T-cell (primary cell): ENCODE measurements at regions of chr20 and their contacts with region 1.

Region 1: DNA sequence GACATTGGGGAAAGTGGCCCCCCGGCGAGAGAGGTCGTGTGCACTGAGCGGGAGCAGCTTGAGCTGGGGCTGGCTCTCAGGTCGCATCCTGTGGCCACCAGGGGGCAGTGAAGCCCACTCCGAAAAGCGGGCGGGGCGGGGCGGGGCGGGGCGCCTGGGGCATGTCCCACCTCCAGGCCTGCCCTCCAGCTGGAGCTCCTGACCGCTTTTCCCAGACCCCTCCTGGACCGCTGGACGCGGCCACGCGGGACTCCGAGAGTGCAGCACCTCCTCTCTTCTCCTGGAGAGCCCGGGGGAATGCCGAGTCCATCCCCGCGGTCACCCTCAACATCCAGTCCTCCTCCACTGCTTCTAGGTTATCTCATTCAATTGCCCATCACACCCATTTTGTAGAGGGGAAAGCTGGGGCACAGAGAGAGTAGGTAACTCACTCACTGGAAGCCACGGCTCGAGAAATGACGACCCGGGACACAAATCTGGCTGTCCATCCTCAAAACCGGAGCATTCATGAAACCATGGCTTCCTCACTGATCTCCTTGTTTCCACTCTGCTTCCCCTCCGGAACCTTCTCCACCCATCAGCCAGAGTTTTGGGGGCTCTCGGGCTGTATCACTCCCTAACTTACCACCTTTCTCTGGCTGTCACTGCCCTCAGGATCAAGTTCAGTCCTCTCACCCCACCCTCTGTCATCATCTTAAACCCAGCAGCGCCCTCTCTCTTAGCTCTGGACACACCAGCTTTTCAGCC is 24.1 kb downstream of the COX4I2 start:
- DNase-seq: peak; percentile 41 to 90 (median 72)
- ATAC-seq: peak; percentile 86 to 90 (median 88)
- H3K4me3 ChIP-seq: peak overlapping the region; percentile 42 to 57
- H3K4me3 Mint-ChIP-seq: peak overlapping the region; percentile 68 to 85 (median 73)
- H3K27ac ChIP-seq: peak overlapping the region; percentile 14
- H3K27ac Mint-ChIP-seq: peak overlapping the region; percentile 82 to 86
- H3K4me1 ChIP-seq: peaks cover 4 to 41% of the 10 kb centered on the region in 2 experiments
- H3K4me1 Mint-ChIP-seq: peaks cover 24 to 39% (median 27%) of the 10 kb centered on the region in 3 donors
- H3K27me3 ChIP-seq: peaks cover 0 to 4% of the 10 kb centered on the region in 2 experiments
- H3K27me3 Mint-ChIP-seq: no peaks in the 10 kb centered on the region

Region 2: DNA sequence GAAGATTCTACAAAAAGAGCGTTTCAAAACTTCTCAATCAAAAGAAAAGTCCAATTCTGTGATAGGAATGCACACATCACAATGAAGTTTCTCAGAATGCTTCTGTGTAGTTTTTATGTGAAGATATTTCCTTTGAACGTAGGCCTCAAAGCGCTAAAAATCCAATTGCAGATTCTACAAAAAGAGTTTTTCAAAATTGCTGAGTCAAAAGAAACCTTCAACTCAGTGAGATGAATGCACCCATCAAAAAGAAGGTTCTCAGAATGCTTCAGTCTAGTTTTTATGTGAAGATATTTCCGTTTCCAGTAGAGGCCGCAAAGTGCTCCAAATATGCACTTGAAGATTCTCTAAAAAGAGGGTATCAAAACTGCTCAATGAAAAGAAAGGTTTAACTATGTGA is 724.0 kb before region 1 on chr20:
- CTCF ChIA-PET with region 1: no interaction called
- POLR2A ChIA-PET with region 1: no interaction called
- DNase-seq: no peak
- ATAC-seq: no peak
- H3K4me3 ChIP-seq: no peak overlapping the region
- H3K4me3 Mint-ChIP-seq: no peak overlapping the region
- H3K27ac ChIP-seq: no peak overlapping the region
- H3K27ac Mint-ChIP-seq: no peak overlapping the region
- H3K4me1 ChIP-seq: no peaks in the 10 kb centered on the region
- H3K4me1 Mint-ChIP-seq: no peaks in the 10 kb centered on the region
- H3K27me3 ChIP-seq: no peaks in the 10 kb centered on the region
- H3K27me3 Mint-ChIP-seq: no peaks in the 10 kb centered on the region

Region 3: GRCh38 chr20:31674895-31675827 is 13.4 kb after region 1 on chr20:
- CTCF ChIA-PET with region 1: interaction called, 7 to 36 read pairs
- POLR2A ChIA-PET with region 1: no interaction called
- DNase-seq: peak; percentile 24 to 84 (median 58)
- ATAC-seq: peak; percentile 67 to 80 (median 72)
- H3K4me3 ChIP-seq: peak overlapping the region; percentile 61 to 79
- H3K4me3 Mint-ChIP-seq: peak overlapping the region; percentile 96 to 99 (median 96)
- H3K27ac ChIP-seq: peak overlapping the region; percentile 89
- H3K27ac Mint-ChIP-seq: peak overlapping the region; percentile 96 to 99
- H3K4me1 ChIP-seq: peaks cover 43 to 86% of the 10 kb centered on the region in 2 experiments
- H3K4me1 Mint-ChIP-seq: peaks cover 67 to 77% (median 72%) of the 10 kb centered on the region in 3 donors
- H3K27me3 ChIP-seq: no peaks in the 10 kb centered on the region
- H3K27me3 Mint-ChIP-seq: no peaks in the 10 kb centered on the region

Region 4: GRCh38 chr20:31684153-31685015 is 22.6 kb after region 1 on chr20:
- CTCF ChIA-PET with region 1: interaction called, 10 to 13 read pairs
- POLR2A ChIA-PET with region 1: interaction called in 1 of 2 experiments, 4 read pairs
- DNase-seq: peak in 11 of 35 experiments; percentile 2 to 47 (median 20)
- ATAC-seq: peak; percentile 23 to 77 (median 60)
- H3K4me3 ChIP-seq: no peak overlapping the region
- H3K4me3 Mint-ChIP-seq: peak overlapping the region in 1 of 3 donors; percentile 52
- H3K27ac ChIP-seq: peak overlapping the region; percentile 47
- H3K27ac Mint-ChIP-seq: peak overlapping the region; percentile 62 to 84
- H3K4me1 ChIP-seq: peaks cover 17 to 65% of the 10 kb centered on the region in 2 experiments
- H3K4me1 Mint-ChIP-seq: peaks cover 78 to 86% (median 79%) of the 10 kb centered on the region in 3 donors
- H3K27me3 ChIP-seq: no peaks in the 10 kb centered on the region
- H3K27me3 Mint-ChIP-seq: no peaks in the 10 kb centered on the region

Region 5: DNA sequence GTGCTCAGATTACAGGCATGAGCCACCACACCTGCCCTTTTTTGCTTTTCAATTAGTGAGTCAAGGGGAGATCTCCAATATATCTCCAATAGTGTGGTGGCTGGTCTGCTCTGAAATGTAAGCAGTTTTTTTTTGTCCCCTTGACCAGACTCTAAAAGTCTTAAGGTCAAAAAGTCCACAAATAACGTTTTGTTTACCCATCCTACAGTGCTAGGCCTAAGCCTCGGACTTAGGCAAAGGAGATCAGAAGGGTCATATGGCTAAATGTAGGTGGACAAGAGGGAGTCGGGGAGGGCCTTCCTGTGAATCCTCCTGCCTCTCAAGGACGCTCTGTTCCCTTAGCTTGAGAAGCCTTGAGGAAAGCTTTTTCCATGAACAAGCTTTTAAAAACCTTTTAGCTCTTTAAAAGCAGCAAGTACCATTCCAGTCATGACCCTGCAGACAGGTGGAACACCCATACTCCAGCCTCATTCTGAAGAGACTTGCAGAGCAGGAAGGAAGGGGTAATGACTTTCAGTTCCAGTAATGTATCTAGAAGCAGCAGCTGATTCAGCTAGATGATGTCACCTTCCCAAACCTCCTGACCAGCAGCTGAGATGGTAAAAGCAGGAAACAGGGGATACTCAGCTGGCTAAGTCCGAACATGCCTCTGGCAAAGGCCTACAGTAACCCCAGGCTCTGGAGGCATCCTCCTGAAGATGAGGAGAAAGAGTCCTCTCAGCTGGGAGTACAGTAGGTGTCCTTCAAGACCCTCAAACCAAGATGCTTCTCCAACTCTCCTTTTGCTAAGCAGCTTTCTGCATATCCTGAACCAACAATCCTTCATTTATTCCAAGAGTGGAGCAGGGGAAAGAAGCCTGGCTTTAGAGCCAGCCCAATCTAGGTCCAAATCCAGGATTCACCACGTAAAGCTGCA is 37.3 kb after region 1 on chr20:
- CTCF ChIA-PET with region 1: interaction called, 4 to 5 read pairs
- POLR2A ChIA-PET with region 1: interaction called, 3 to 15 read pairs
- DNase-seq: no peak
- ATAC-seq: peak in 2 of 4 experiments; percentile 47 to 56
- H3K4me3 ChIP-seq: no peak overlapping the region
- H3K4me3 Mint-ChIP-seq: no peak overlapping the region
- H3K27ac ChIP-seq: peak overlapping the region; percentile 41
- H3K27ac Mint-ChIP-seq: peak overlapping the region; percentile 86 to 87
- H3K4me1 ChIP-seq: peaks cover 2 to 33% of the 10 kb centered on the region in 2 experiments
- H3K4me1 Mint-ChIP-seq: peaks cover 50 to 57% (median 53%) of the 10 kb centered on the region in 3 donors
- H3K27me3 ChIP-seq: no peaks in the 10 kb centered on the region
- H3K27me3 Mint-ChIP-seq: no peaks in the 10 kb centered on the region

Region 6: DNA sequence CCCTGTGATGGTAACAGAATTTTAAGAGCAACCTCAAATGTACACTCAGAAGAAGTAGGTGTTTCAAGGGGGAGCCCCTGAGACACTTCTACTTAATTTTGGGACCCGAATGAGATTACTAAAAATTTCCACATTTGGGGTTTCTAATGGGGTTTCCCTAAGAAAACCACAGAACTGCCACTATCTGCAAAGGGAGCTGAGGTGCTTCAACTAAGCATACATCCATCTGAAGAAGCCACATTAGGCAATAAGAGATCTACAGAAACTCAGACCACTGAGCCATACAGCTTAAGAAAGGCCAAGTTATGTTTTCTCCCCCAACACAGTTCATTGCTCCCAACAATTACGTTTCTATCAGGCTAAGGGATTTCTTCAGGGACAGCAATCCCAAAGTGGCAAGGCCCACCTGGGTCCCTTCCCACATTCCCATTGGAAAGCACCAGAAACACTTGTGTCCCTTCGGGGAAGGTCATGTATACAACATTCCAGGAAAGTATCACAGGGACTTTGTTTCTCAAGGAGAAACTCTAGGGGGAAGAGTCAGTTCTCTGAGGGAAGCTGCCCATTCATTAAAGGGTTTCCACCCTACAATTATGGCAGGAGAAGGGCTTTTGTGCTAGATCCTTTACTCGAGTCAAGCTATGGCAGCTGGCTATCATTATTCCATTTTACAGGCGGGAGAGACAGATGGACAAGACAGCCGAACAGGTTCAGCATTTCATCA is 55.8 kb after region 1 on chr20:
- CTCF ChIA-PET with region 1: interaction called, 41 to 282 read pairs
- POLR2A ChIA-PET with region 1: no interaction called
- DNase-seq: peak in 1 of 35 experiments; percentile 73
- ATAC-seq: peak in 2 of 4 experiments; percentile 11 to 54
- H3K4me3 ChIP-seq: no peak overlapping the region
- H3K4me3 Mint-ChIP-seq: peak overlapping the region; percentile 49 to 66 (median 50)
- H3K27ac ChIP-seq: peak overlapping the region; percentile 64
- H3K27ac Mint-ChIP-seq: peak overlapping the region; percentile 87 to 92
- H3K4me1 ChIP-seq: peaks cover 44 to 69% of the 10 kb centered on the region in 2 experiments
- H3K4me1 Mint-ChIP-seq: peaks cover 89 to 97% (median 93%) of the 10 kb centered on the region in 3 donors
- H3K27me3 ChIP-seq: no peaks in the 10 kb centered on the region
- H3K27me3 Mint-ChIP-seq: no peaks in the 10 kb centered on the region

Region 7: DNA sequence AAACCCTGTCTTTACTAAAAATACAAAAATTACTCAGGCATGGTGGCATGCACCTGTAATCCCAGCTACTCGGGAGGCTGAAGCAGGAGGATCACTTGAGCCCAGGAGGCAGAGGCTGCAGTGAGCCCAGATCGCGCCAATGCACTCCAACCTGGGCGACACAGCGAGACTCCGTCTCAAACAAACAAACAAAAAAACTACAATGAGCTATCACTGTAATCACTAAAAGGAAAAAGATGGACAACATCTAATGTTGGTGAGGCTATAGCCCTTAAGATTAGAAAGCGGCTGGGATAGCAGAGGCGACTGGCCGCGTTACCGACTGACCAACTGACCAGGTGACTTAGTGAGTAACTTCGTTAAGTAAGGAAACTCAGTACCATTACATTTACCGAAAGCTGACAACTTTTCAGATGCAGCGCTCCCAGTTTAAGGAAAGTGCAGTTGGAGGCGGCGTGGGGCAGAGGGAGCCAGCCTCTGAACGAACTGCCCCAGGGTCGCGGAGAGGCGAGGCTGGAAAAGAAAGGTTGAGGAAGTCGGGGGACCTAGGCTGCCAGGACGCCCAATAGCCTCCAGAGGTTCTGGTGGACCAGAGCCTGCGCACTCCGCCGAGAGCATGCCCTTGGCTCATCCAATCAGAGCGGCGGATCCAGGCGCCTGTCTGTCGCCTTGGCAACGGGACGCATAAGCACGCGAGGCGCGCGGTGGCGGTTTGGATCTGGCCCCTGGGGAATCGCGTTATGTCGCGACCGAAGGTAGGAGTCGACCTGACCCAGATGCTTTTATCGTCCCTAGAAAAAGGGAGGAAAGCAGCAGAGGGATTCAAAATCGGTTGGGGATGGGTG is 217.6 kb after region 1 on chr20:
- CTCF ChIA-PET with region 1: interaction called in 1 of 2 experiments, 3 read pairs
- POLR2A ChIA-PET with region 1: interaction called in 1 of 2 experiments, 10 read pairs
- DNase-seq: peak; percentile 47 to 86 (median 66)
- ATAC-seq: peak; percentile 85 to 95 (median 88)
- H3K4me3 ChIP-seq: peak overlapping the region; percentile 65 to 90
- H3K4me3 Mint-ChIP-seq: peak overlapping the region; percentile 88 to 91 (median 88)
- H3K27ac ChIP-seq: no peak overlapping the region
- H3K27ac Mint-ChIP-seq: peak overlapping the region in 1 of 2 donors; percentile 70
- H3K4me1 ChIP-seq: peaks cover 4 to 12% of the 10 kb centered on the region in 2 experiments
- H3K4me1 Mint-ChIP-seq: peaks cover 16 to 19% (median 17%) of the 10 kb centered on the region in 3 donors
- H3K27me3 ChIP-seq: peaks cover 3 to 11% of the 10 kb centered on the region in 2 experiments
- H3K27me3 Mint-ChIP-seq: peaks cover 3 to 9% of the 10 kb centered on the region in 2 donors